ENCODE measurements at regions of chr14 and their contacts with region 1.

Region 1: DNA sequence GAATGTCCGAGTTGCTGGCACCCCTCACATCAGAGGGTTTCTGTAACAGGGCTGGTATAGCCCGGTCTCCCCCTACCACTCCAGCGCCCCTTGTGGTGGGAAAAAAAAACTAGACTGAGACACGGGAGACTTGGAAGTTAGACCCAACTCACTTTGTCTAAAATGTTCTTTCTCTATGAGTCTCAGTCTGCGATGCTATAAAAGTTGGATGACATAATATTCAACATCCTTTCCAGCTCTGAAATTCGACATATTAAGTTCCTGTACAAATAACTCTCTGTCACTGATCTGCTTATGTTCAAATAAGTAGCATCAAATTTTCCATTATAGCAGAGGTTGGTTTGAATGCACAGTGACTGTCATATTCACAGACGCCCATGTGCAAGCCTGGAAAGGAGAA is 25.7 kb upstream of the TC2N start:
- DNase-seq: peak in 1 of 5 donors; percentile 26
- H3K4me3 ChIP-seq: no peak overlapping the region
- H3K4me3 Mint-ChIP-seq: no peak overlapping the region
- H3K27ac ChIP-seq: no peak overlapping the region
- H3K27ac Mint-ChIP-seq: peak overlapping the region in 4 of 8 donors; percentile 66 to 84 (median 78)
- H3K4me1 ChIP-seq: peaks cover 59% of the 10 kb centered on the region
- H3K4me1 Mint-ChIP-seq: peaks cover 55 to 70% (median 60%) of the 10 kb centered on the region in 3 donors
- H3K27me3 ChIP-seq: no peaks in the 10 kb centered on the region
- H3K27me3 Mint-ChIP-seq: no peaks in the 10 kb centered on the region

Region 2: DNA sequence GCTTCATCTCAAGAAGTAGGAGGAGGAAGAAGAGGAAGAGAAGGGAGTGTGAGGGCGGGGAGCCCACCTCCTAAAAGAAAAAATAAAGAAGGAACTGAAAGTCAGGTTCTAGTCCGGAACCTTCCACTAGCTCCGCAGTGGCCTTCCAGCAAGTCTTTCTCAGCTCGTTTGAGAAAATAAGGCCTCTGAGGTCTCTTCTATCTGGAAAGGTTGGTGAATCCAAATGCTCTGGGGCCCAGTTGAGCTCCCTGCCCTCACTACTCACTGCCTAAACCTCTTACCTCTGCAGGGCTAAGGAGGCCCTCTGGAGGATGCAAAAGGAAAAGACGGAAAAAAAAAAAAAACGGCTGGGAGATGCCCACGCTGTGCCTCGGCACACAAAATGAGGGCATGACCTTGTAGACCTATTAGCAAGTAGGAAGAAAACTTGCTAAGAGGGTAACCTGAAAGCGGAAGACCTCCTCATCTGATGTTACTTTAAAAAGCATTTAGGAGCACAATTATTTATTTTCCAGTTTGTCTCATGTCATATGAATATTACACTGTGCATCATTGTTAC is 18.5 kb after region 1 on chr14:
- CTCF ChIA-PET with region 1: interaction called, 30 read pairs
- POLR2A ChIA-PET with region 1: no interaction called
- DNase-seq: peak in 4 of 5 donors; percentile 28 to 66 (median 52)
- H3K4me3 ChIP-seq: no peak overlapping the region
- H3K4me3 Mint-ChIP-seq: no peak overlapping the region
- H3K27ac ChIP-seq: no peak overlapping the region
- H3K27ac Mint-ChIP-seq: peak overlapping the region in 3 of 8 donors; percentile 37 to 83 (median 77)
- H3K4me1 ChIP-seq: peaks cover 5% of the 10 kb centered on the region
- H3K4me1 Mint-ChIP-seq: peaks cover 19 to 35% (median 23%) of the 10 kb centered on the region in 3 donors
- H3K27me3 ChIP-seq: no peaks in the 10 kb centered on the region
- H3K27me3 Mint-ChIP-seq: peaks cover 0 to 3% of the 10 kb centered on the region in 2 donors

Region 3: GRCh38 chr14:92057976-92058917 is 165.2 kb after region 1 on chr14:
- CTCF ChIA-PET with region 1: no interaction called
- POLR2A ChIA-PET with region 1: no interaction called
- DNase-seq: no peak
- H3K4me3 ChIP-seq: no peak overlapping the region
- H3K4me3 Mint-ChIP-seq: no peak overlapping the region
- H3K27ac ChIP-seq: no peak overlapping the region
- H3K27ac Mint-ChIP-seq: peak overlapping the region in 1 of 8 donors; percentile 21
- H3K4me1 ChIP-seq: no peaks in the 10 kb centered on the region
- H3K4me1 Mint-ChIP-seq: no peaks in the 10 kb centered on the region
- H3K27me3 ChIP-seq: no peaks in the 10 kb centered on the region
- H3K27me3 Mint-ChIP-seq: no peaks in the 10 kb centered on the region

Measured in CD8-positive, alpha-beta memory T cell (primary cell).